GM13977 (cell line): ENCODE measurements at regions of chr12 and their contacts with region 1.

Region 1: GRCh38 chr12:122860346-122861090 is 25.3 kb downstream of the HIP1R start:
- DNase-seq: peak; percentile 92
- CTCF ChIP-seq: peak; percentile 94

Region 2: GRCh38 chr12:122951979-122952892 is 91.7 kb after region 1 on chr12:
- in situ Hi-C with region 1: loop called (anchors 5 kb)
- DNase-seq: peak; percentile 91
- CTCF ChIP-seq: peak; percentile 97